Endothelial cell of umbilical vein (primary cell): ENCODE measurements at regions of chr13 and their contacts with region 1.

Region 1: DNA sequence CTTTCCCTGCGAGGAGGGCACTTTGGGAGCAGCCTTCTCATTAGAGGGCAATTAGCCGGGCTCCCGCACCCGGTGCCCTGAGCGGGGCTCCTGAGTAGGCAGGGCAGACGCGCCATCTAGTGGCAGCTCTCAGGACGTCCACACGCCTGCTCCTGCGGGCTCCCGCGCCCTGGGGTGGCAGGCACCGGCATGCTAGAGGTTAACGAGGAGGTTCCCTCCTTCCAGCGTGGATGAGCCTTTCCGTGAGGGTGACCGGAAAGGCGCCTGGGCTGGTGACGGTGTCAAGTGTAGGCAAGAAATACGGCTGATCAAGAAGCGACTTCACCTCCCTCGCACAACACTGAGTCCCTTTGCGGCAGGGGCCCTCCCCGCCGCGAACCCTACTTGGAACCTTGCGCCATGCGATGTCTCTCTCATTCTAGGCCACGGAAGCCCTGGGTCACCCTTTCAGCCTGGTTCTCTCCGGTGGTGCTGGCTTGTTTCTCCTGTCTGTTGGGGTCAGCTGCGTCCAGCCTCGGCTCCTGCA is 67.7 kb downstream of the ALOX5AP start:
- DNase-seq: peak; percentile 74
- H3K4me3 ChIP-seq: peak overlapping the region in 1 of 3 experiments; percentile 23
- H3K27ac ChIP-seq: no peak overlapping the region
- H3K4me1 ChIP-seq: peaks cover 28% of the 10 kb centered on the region
- H3K27me3 ChIP-seq: no peaks in the 10 kb centered on the region
- CTCF ChIP-seq: peak; percentile 93 to 94
- POLR2A ChIP-seq: no peak

Region 2: GRCh38 chr13:30355384-30355699 is 447.7 kb before region 1 on chr13:
- CTCF ChIA-PET with region 1: no interaction called
- POLR2A ChIA-PET with region 1: no interaction called
- dilution Hi-C with region 1: no loop called
- intact Hi-C with region 1: loop called (anchors 5 kb)
- DNase-seq: peak; percentile 37
- H3K4me3 ChIP-seq: no peak overlapping the region
- H3K27ac ChIP-seq: no peak overlapping the region
- H3K4me1 ChIP-seq: no peaks in the 10 kb centered on the region
- H3K27me3 ChIP-seq: no peaks in the 10 kb centered on the region
- CTCF ChIP-seq: peak; percentile 43 to 72
- POLR2A ChIP-seq: no peak

Region 3: GRCh38 chr13:30465585-30466357 is 337.2 kb before region 1 on chr13 and contains the start of gene HMGB1:
- CTCF ChIA-PET with region 1: no interaction called
- POLR2A ChIA-PET with region 1: no interaction called
- dilution Hi-C with region 1: no loop called
- intact Hi-C with region 1: loop called (anchors 1 kb)
- DNase-seq: peak; percentile 98
- H3K4me3 ChIP-seq: peak within 1 kb of the TSS; percentile 48 to 69 (median 66)
- H3K27ac ChIP-seq: peak within 1 kb of the TSS; percentile 85
- H3K4me1 ChIP-seq: peaks cover 25% of the 10 kb centered on the region
- H3K27me3 ChIP-seq: no peaks in the 10 kb centered on the region
- CTCF ChIP-seq: no peak
- POLR2A ChIP-seq: peak; percentile 80
- total RNA-seq, gene HMGB1: 670 and 675 TPM in 2 replicates

Region 4: DNA sequence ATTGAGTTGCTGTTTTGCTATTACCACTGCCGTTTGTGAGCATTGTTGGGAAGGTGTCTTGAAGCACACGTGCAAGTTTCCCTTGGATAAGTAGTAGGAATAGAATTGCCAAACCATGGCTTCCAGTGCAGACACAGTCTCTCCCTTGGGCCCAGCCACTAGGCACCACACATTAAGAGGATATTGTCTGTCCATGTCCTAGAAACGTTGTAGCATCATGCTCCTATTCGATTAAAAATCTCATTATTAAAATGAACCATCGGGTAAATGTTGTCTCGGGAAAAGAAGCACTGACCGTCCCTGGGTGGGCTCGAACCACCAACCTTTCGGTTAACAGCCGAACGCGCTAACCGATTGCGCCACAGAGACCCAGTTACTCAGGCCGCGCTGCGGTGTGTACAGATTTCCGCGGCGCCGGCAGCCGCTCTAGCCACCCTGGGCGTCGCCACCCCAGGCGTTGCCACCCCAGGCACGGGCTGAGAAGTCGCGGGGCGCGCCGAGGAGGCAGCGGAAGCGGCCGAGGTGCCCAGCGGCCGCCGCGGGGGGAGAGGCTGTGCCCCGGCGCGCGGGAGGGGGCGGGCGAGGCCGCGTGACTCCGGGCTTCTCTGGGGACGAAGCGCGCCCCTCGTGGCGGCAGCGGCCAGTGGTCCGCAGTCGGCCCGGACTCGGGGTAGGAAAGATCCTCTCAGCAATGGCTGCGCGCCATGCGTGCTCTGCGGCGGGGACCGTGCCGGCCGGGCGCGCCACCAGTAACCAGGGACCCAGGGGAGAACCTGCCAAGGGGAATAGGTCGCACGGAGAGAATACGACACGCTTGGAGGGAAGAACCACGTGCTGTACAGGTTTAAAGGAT is 129.1 kb before region 1 on chr13:
- CTCF ChIA-PET with region 1: interaction called, 8 read pairs
- POLR2A ChIA-PET with region 1: no interaction called
- dilution Hi-C with region 1: loop called (anchors 25 kb)
- intact Hi-C with region 1: loop called (anchors 1 kb)
- DNase-seq: peak; percentile 88
- H3K4me3 ChIP-seq: peak overlapping the region; percentile 39 to 48 (median 43)
- H3K27ac ChIP-seq: peak overlapping the region; percentile 66
- H3K4me1 ChIP-seq: peaks cover 8% of the 10 kb centered on the region
- H3K27me3 ChIP-seq: no peaks in the 10 kb centered on the region
- CTCF ChIP-seq: peak; percentile 82 to 83
- POLR2A ChIP-seq: no peak

Region 5: GRCh38 chr13:30792285-30793000 is 10.6 kb before region 1 on chr13:
- CTCF ChIA-PET with region 1: interaction called, 15 read pairs
- POLR2A ChIA-PET with region 1: interaction called, 3 read pairs
- dilution Hi-C with region 1: no loop called
- intact Hi-C with region 1: no loop called
- DNase-seq: peak; percentile 96
- H3K4me3 ChIP-seq: no peak overlapping the region
- H3K27ac ChIP-seq: peak overlapping the region; percentile 73
- H3K4me1 ChIP-seq: peaks cover 31% of the 10 kb centered on the region
- H3K27me3 ChIP-seq: no peaks in the 10 kb centered on the region
- CTCF ChIP-seq: peak; percentile 47 to 63
- POLR2A ChIP-seq: no peak

Region 6: DNA sequence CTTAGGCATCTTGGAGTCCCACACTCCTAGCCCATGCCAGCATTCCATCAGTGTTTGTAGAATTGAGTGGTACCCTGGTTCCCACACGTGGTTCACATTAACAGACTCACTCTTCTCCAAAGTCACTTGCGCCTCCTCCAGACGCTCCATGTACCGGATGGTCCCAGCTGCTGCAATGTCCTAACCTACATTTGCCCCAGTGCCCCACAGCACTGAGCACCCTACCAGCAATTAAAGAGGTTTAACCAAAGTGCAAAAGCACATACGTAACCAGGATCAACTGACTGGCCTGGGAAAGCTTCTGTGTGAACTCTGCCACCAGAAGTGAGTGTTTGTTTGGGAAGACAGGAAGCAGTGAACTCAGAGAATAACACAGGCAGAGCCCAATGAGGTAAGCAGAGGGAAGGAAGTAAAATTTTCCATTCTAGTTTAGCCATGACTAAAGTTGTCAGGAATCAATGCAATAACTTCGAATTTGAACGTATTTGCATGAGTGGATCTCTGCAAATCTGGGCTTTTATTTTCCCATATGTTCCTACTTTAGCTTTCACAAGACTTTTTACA is 95.7 kb after region 1 on chr13:
- CTCF ChIA-PET with region 1: no interaction called
- POLR2A ChIA-PET with region 1: no interaction called
- dilution Hi-C with region 1: no loop called
- intact Hi-C with region 1: loop called (anchors 2 kb)
- DNase-seq: peak; percentile 99
- H3K4me3 ChIP-seq: peak overlapping the region in 1 of 3 experiments; percentile 20
- H3K27ac ChIP-seq: peak overlapping the region; percentile 90
- H3K4me1 ChIP-seq: peaks cover 40% of the 10 kb centered on the region
- H3K27me3 ChIP-seq: no peaks in the 10 kb centered on the region
- CTCF ChIP-seq: no peak
- POLR2A ChIP-seq: no peak

Region 7: DNA sequence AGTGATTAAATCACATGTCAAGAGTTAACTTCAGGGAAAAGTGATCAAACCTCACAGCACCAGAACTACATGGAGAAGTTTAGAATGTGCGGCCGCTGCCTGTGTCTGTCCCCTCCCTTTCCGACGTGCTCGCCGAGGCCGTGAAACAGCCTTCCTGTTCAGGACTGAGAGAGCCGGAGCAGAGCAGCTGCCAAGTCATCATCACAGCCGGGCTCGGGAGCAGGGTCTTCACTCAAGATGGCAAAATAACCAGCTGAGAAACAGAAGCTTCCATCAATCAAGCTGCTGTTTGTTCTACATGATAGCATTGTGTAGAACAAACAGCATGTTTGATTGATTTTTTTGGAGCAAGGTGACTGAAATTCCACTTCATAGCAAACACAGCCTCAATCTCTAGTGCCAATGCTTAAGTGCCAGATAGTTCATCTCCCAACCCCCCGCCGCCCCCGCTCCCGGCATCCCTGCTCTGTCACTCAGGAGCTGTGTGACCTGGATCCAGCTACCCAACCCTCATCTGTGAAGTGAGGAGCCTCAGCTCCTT is 288.0 kb after region 1 on chr13:
- CTCF ChIA-PET with region 1: no interaction called
- POLR2A ChIA-PET with region 1: no interaction called
- dilution Hi-C with region 1: no loop called
- intact Hi-C with region 1: no loop called
- DNase-seq: peak; percentile 70
- H3K4me3 ChIP-seq: no peak overlapping the region
- H3K27ac ChIP-seq: peak overlapping the region; percentile 2
- H3K4me1 ChIP-seq: peaks cover 8% of the 10 kb centered on the region
- H3K27me3 ChIP-seq: peaks cover 4% of the 10 kb centered on the region in 2 experiments
- CTCF ChIP-seq: no peak
- POLR2A ChIP-seq: no peak